MCF 10A (cell line): ENCODE measurements at regions of chr12 and their contacts with region 1.

Region 1: DNA sequence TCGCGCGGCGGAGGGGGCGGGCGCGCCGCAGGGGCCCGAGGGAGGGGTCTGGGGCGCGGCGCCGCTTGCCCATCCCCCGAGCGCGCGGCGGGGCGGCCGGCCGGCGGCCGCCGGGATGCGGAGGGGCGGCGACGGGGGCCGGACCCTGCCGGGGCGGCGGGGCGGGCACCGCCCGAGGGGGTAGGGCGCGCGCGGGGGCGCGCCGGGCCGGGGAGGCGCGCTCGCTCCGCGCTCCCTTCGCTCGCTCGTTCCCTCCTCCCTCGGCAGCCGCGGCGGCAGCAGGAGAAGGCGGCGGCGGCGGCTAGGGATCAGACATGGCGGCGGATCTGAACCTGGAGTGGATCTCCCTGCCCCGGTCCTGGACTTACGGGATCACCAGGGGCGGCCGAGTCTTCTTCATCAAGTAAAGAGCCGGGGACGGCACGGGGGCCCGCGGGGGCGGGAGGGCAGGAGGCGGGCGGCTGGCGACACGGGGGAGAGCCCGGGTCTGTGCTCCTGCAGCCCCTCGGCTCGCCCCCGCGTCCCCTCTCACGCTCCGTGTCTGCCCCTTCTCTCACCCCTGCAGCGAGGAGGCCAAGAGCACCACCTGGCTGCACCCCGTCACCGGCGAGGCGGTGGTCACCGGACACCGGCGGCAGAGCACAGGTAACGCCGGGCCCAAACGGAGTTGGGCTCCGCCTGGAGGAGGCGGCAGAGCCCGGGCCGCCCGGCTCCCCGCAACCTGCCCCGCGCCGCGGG is at the start of gene PLEKHA5:
- DNase-seq: peak; percentile 61
- H3K4me3 Mint-ChIP-seq: peak within 1 kb of the TSS; percentile 88
- H3K27ac Mint-ChIP-seq: peak within 1 kb of the TSS; percentile 63
- H3K4me1 Mint-ChIP-seq: peaks cover 18% of the 10 kb centered on the region
- H3K27me3 Mint-ChIP-seq: no peaks in the 10 kb centered on the region
- CTCF ChIP-seq: no peak
- total RNA-seq, gene PLEKHA5: 25.2 and 27.4 TPM in 2 replicates

Region 2: GRCh38 chr12:18250313-18250916 is 879.2 kb before region 1 on chr12:
- CTCF ChIA-PET with region 1: no interaction called
- POLR2A ChIA-PET with region 1: no interaction called
- intact Hi-C with region 1: loop called (anchors 2 kb)
- DNase-seq: peak; percentile 73
- H3K4me3 Mint-ChIP-seq: no peak overlapping the region
- H3K27ac Mint-ChIP-seq: no peak overlapping the region
- H3K4me1 Mint-ChIP-seq: no peaks in the 10 kb centered on the region
- H3K27me3 Mint-ChIP-seq: no peaks in the 10 kb centered on the region
- CTCF ChIP-seq: peak; percentile 56

Region 3: DNA sequence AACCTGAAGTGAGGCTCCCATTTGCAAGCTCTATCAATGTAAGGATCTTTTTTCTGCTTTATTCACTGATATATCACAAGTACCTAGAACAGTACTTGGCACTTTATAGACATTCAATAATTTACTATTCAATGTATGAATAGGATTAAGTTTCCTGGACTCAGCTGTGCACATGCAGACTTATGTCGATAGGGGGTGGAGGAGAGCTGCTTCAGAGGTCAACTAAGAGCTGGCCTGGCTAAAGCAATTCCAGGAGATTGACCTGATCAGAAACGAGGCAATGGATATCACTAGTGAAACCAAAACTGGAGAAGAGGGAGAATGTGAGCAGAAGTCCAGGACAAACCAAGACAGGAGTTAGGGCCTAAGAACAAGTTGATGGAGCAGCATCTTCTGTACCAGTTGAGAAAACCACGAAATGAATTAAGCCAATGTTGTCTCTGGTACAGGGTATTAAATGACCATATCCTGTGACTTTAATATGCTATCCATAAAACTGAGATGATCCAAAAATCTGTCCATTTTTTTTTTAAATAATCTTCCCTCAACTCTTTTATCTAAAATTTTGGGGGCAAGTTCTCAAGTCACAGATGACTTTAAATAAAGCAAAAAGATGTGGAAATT is 699.1 kb before region 1 on chr12:
- CTCF ChIA-PET with region 1: interaction called, 10 read pairs
- POLR2A ChIA-PET with region 1: no interaction called
- intact Hi-C with region 1: loop called (anchors 2 kb)
- DNase-seq: peak; percentile 70
- H3K4me3 Mint-ChIP-seq: no peak overlapping the region
- H3K27ac Mint-ChIP-seq: no peak overlapping the region
- H3K4me1 Mint-ChIP-seq: peaks cover 10% of the 10 kb centered on the region
- H3K27me3 Mint-ChIP-seq: no peaks in the 10 kb centered on the region
- CTCF ChIP-seq: peak; percentile 91

Region 4: GRCh38 chr12:18828483-18828882 is 301.2 kb before region 1 on chr12:
- CTCF ChIA-PET with region 1: no interaction called
- POLR2A ChIA-PET with region 1: no interaction called
- intact Hi-C with region 1: no loop called
- DNase-seq: no peak
- H3K4me3 Mint-ChIP-seq: no peak overlapping the region
- H3K27ac Mint-ChIP-seq: no peak overlapping the region
- H3K4me1 Mint-ChIP-seq: no peaks in the 10 kb centered on the region
- H3K27me3 Mint-ChIP-seq: no peaks in the 10 kb centered on the region
- CTCF ChIP-seq: no peak

Region 5: GRCh38 chr12:18861287-18861858 is 268.3 kb before region 1 on chr12:
- CTCF ChIA-PET with region 1: interaction called, 16 read pairs
- POLR2A ChIA-PET with region 1: interaction called, 4 read pairs
- intact Hi-C with region 1: loop called (anchors 1 kb)
- DNase-seq: peak; percentile 64
- H3K4me3 Mint-ChIP-seq: no peak overlapping the region
- H3K27ac Mint-ChIP-seq: no peak overlapping the region
- H3K4me1 Mint-ChIP-seq: peaks cover 15% of the 10 kb centered on the region
- H3K27me3 Mint-ChIP-seq: no peaks in the 10 kb centered on the region
- CTCF ChIP-seq: peak; percentile 78

Region 6: DNA sequence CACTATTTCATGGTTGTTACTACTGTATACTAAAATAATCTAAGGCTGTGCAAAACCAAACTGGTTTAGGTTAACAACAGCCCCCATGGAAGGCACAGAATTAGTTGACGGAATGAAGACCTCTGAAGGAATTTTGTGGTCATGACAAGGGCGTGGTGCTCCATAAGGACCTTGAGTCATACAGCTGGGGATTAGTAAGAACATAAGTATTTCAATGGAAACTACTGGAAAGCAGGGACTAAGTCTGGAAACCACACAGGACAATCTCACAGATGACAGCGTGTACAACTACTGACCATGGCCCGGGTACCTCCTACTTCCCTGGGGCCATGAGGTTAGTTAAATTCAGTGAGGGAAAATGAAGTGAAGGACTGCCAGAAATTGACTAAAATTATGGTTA is 98.6 kb before region 1 on chr12:
- CTCF ChIA-PET with region 1: interaction called, 3 read pairs
- POLR2A ChIA-PET with region 1: interaction called, 12 read pairs
- intact Hi-C with region 1: no loop called
- DNase-seq: peak; percentile 69
- H3K4me3 Mint-ChIP-seq: peak overlapping the region; percentile 52
- H3K27ac Mint-ChIP-seq: peak overlapping the region; percentile 95
- H3K4me1 Mint-ChIP-seq: peaks cover 29% of the 10 kb centered on the region
- H3K27me3 Mint-ChIP-seq: no peaks in the 10 kb centered on the region
- CTCF ChIP-seq: no peak

Region 7: GRCh38 chr12:19095756-19096480 is 33.7 kb before region 1 on chr12:
- CTCF ChIA-PET with region 1: interaction called, 6 read pairs
- POLR2A ChIA-PET with region 1: interaction called, 47 read pairs
- intact Hi-C with region 1: loop called (anchors 2 kb)
- DNase-seq: peak; percentile 42
- H3K4me3 Mint-ChIP-seq: peak overlapping the region; percentile 20
- H3K27ac Mint-ChIP-seq: peak overlapping the region; percentile 90
- H3K4me1 Mint-ChIP-seq: peaks cover 14% of the 10 kb centered on the region
- H3K27me3 Mint-ChIP-seq: no peaks in the 10 kb centered on the region
- CTCF ChIP-seq: no peak

Region 8: GRCh38 chr12:19181666-19182426 is 52.2 kb after region 1 on chr12:
- CTCF ChIA-PET with region 1: interaction called, 5 read pairs
- POLR2A ChIA-PET with region 1: interaction called, 15 read pairs
- intact Hi-C with region 1: loop called (anchors 2 kb)
- DNase-seq: no peak
- H3K4me3 Mint-ChIP-seq: no peak overlapping the region
- H3K27ac Mint-ChIP-seq: no peak overlapping the region
- H3K4me1 Mint-ChIP-seq: peaks cover 5% of the 10 kb centered on the region
- H3K27me3 Mint-ChIP-seq: no peaks in the 10 kb centered on the region
- CTCF ChIP-seq: peak; percentile 21